ENCODE measurements at regions of chr7 and their contacts with region 1.

Region 1: GRCh38 chr7:6435486-6436384 is 12.0 kb downstream of the DAGLB start:
- DNase-seq: peak; percentile 86
- ATAC-seq: peak; percentile 71

Region 2: DNA sequence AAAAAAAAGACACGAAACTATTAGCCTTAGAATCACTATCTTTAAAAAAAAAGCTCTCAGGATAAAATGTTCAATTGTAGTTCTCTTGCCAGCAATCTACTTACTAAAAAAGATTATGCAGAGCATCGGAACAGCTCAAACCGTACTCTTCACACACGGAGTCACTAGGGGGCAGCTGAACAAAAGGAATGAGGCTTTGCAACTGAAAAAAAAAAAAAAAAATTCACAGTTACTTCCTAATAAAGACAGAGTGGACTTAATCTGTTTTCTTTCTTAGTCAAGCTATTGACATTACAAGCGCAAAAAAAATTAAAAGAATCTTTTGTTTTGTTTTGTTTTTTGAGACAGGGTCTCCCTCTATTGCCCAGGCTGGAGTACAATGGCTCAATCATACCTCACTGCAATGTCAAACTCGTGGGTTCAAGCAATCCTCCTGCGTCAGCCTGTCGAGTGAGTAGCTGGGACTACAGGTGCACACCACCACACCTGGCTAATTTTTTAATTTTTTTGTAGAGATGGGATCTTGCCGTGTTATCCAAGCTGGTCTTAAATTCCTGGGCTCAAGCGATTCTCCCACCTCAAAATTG is 438.4 kb before region 1 on chr7:
- intact Hi-C with region 1: loop called (anchors 10 kb)
- DNase-seq: no peak
- ATAC-seq: peak; percentile 50

Measured in Right ventricle myocardium inferior (tissue), 1 donor.